ENCODE measurements at regions of chr17 and their contacts with region 1.

Region 1: DNA sequence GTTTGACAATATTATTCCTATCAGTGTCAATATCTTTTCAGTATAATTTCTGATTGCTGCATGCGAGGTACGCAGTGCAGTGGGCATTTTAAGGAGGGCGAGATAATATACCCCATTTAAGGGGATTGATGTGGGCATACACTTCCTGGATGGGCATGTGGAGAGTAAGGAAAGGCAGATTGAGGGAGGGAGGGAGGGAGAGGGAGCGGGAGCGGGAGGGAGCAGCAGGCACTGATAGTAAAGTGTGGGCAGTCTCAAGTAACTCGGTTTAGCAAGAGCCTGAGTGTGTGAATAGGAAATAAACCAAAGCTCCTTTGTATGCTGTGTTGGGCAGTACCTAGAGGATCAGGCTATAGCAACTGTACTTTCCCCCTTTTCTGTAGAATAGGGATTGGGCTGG is 5.1 kb downstream of the BPTF start:
- DNase-seq: no peak
- ATAC-seq: peak; percentile 17; the same call in 2 of the 3 replicates
- H3K4me3 ChIP-seq: no peak overlapping the region
- H3K27ac ChIP-seq: no peak overlapping the region
- H3K4me1 ChIP-seq: peaks cover 6 to 14% of the 10 kb centered on the region in 2 experiments; a peak in 2 of 5 replicates
- H3K27me3 ChIP-seq: no peaks in the 10 kb centered on the region
- CTCF ChIP-seq: no peak
- EP300 ChIP-seq: no peak
- POLR2A ChIP-seq: no peak
- RAD21 ChIP-seq: no peak

Region 2: GRCh38 chr17:67974598-67975066 is 144.2 kb after region 1 on chr17:
- CTCF ChIA-PET with region 1: no interaction called
- POLR2A ChIA-PET with region 1: no interaction called
- in situ Hi-C with region 1: no loop called
- intact Hi-C with region 1: loop called (anchors 5 kb)
- DNase-seq: no peak
- ATAC-seq: no peak
- H3K4me3 ChIP-seq: no peak overlapping the region
- H3K27ac ChIP-seq: no peak overlapping the region
- H3K4me1 ChIP-seq: no peaks in the 10 kb centered on the region
- H3K27me3 ChIP-seq: no peaks in the 10 kb centered on the region
- CTCF ChIP-seq: no peak
- EP300 ChIP-seq: no peak
- POLR2A ChIP-seq: no peak
- RAD21 ChIP-seq: no peak

Region 3: GRCh38 chr17:68019675-68020408 is 189.4 kb after region 1 on chr17:
- CTCF ChIA-PET with region 1: no interaction called
- POLR2A ChIA-PET with region 1: no interaction called
- in situ Hi-C with region 1: no loop called
- intact Hi-C with region 1: loop called (anchors 10 kb)
- DNase-seq: peak; percentile 92 to 98 (median 94)
- ATAC-seq: peak; percentile 97
- H3K4me3 ChIP-seq: peak overlapping the region; percentile 58
- H3K27ac ChIP-seq: peak overlapping the region; percentile 95
- H3K4me1 ChIP-seq: peaks cover 12% of the 10 kb centered on the region in 2 experiments; a peak in 4 of 5 replicates
- H3K27me3 ChIP-seq: no peaks in the 10 kb centered on the region
- CTCF ChIP-seq: peak; percentile 46 to 62 (median 50); a peak in 5 of 6 replicates
- EP300 ChIP-seq: peak; percentile 85
- POLR2A ChIP-seq: peak; percentile 91
- RAD21 ChIP-seq: peak in 1 of 2 experiments; percentile 9; a peak in 1 of 4 replicates